Prostate gland (tissue), 2 donors: ENCODE measurements at regions of chr3 and their contacts with region 1.

Region 1: DNA sequence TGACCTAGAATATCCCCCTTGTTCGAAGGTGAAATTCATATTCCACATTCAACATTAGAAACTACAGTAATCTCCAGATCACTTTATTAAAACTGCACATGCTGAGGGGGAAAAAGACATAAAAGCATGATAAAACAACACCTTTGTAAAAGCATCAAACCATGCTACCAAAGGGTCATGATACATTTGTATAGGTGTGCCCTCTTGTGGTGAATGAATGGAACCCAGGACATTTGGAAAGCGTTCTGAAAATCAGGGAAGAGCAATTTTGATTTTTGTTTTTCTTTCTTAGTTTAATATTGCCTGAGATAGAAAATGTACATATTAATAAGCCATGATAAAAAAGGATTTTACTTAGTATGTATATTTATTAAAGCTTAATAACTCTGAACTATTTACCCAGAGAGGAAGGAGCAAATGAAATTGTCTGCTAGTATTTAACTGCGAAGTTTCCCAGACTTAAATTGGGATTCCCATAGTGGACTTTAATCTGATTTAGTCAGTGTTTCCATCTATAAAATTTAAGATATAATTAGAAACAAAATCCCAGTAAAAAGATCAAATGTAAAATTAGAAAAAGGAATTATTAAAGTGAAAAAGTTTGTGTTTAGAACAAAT is 105.8 kb upstream of the ARL6 start:
- DNase-seq: no peak
- H3K4me3 ChIP-seq: no peak overlapping the region
- H3K27ac ChIP-seq: no peak overlapping the region
- H3K4me1 ChIP-seq: no peaks in the 10 kb centered on the region
- H3K27me3 ChIP-seq: no peaks in the 10 kb centered on the region
- CTCF ChIP-seq: peak; percentile 20 to 62 (median 57)
- POLR2A ChIP-seq: no peak

Region 2: DNA sequence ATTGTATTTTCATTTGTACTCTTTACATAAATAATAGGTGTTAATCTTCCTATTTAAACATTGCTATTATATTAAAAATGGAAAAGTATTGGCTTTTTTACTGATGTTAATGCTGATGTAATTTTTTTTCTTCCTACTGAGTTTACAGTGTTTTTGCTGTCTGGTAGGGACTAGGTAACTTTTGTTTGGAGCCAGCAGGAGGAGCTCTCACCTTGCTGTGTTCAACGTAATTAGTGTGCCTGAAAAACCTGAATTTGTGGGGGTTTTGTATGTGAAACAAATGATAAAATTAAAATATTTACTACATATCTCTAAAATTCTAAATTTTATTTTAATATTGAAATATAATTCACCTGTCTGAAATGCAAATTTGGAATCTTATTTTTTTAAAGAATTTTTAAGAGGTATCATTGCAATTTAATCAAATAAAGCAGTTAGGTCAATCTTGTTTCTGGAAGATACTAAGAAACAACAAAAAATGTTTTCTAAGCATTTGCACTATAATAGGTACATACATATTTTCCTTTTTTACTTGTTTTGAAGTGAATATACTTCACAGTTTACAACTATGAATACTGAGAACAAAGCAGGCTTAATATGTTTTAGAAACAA is 795.5 kb before region 1 on chr3:
- intact Hi-C with region 1: loop called (anchors 10 kb)
- DNase-seq: peak; percentile 27
- H3K4me3 ChIP-seq: no peak overlapping the region
- H3K27ac ChIP-seq: no peak overlapping the region
- H3K4me1 ChIP-seq: no peaks in the 10 kb centered on the region
- H3K27me3 ChIP-seq: no peaks in the 10 kb centered on the region
- CTCF ChIP-seq: peak in 3 of 4 experiments; percentile 38 to 65 (median 54)
- POLR2A ChIP-seq: no peak

Region 3: GRCh38 chr3:97485206-97485605 is 173.6 kb before region 1 on chr3:
- intact Hi-C with region 1: no loop called
- DNase-seq: peak; percentile 5
- H3K4me3 ChIP-seq: no peak overlapping the region
- H3K27ac ChIP-seq: peak overlapping the region in 1 of 2 donors; percentile 9
- H3K4me1 ChIP-seq: no peaks in the 10 kb centered on the region
- H3K27me3 ChIP-seq: no peaks in the 10 kb centered on the region
- CTCF ChIP-seq: no peak
- POLR2A ChIP-seq: no peak